ENCODE measurements at regions of chr11 and their contacts with region 1.

Region 1: GRCh38 chr11:77047007-77047927 is 13.1 kb downstream of the B3GNT6 start:
- DNase-seq: peak; percentile 92 to 94
- H3K4me3 ChIP-seq: peak overlapping the region; percentile 41
- H3K4me3 Mint-ChIP-seq: peak overlapping the region; percentile 65
- H3K27ac Mint-ChIP-seq: peak overlapping the region; percentile 49
- H3K4me1 ChIP-seq: peaks cover 9% of the 10 kb centered on the region; the same call in 1 of the 2 replicates
- H3K4me1 Mint-ChIP-seq: peaks cover 15% of the 10 kb centered on the region
- H3K27me3 ChIP-seq: no peaks in the 10 kb centered on the region
- H3K27me3 Mint-ChIP-seq: no peaks in the 10 kb centered on the region
- CTCF ChIP-seq: peak; percentile 81 to 82

Region 2: DNA sequence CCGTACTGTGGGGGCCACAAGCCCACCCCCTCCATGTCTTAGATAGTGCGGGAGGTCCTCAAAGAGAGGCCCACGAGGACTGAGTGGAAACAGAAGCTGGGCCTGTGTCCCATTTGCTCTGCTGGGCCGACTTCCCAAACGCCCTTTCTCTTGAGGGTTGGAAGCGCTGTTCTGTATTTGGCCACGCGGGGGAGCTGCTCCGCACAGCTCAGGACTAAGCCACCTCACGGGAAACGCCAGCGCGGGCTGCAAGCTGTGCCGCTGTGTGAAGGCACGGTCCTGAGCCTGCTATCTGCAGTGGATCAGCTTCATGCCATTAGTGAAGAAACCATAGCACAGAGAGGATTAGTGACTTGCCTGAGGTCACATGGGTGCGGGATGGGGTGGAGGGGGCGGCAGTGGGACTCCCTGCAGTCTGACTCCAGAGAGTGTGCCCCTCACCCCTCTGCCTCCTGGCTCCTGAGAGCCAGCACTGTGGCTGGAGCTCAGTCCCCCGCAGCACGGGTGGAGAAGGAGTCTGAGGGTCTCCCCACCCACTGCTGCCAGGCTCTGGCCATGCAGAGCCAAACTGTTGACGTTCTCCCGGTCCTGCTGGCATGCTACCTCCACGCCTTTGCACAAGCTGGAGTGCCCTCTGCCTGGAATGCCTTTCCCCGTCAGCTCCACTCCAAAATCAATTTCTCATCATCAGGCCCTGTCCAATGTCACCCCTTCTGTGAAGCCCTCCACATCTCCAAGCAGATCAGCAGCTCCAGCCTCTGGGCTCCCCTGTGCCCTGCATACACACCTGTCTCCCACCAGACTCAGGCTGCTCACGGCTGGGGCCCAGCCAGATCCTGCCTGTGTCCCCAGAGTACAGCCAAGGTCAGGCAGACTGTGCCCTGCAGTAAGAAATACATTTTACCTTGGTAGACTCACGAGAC is 325.3 kb before region 1 on chr11:
- CTCF ChIA-PET with region 1: interaction called, 14 read pairs
- POLR2A ChIA-PET with region 1: no interaction called
- intact Hi-C with region 1: no loop called
- DNase-seq: peak; percentile 85 to 91
- H3K4me3 ChIP-seq: no peak overlapping the region
- H3K4me3 Mint-ChIP-seq: no peak overlapping the region
- H3K27ac Mint-ChIP-seq: no peak overlapping the region
- H3K4me1 ChIP-seq: 0 out of 2 replicates have a peak, but pooled peaks cover 7% of the 10 kb centered on the region
- H3K4me1 Mint-ChIP-seq: peaks cover 5% of the 10 kb centered on the region
- H3K27me3 ChIP-seq: no peaks in the 10 kb centered on the region; the same call in 1 of the 2 replicates
- H3K27me3 Mint-ChIP-seq: peaks cover 5% of the 10 kb centered on the region
- CTCF ChIP-seq: peak; percentile 98

Region 3: GRCh38 chr11:76823481-76824078 is 223.7 kb before region 1 on chr11:
- CTCF ChIA-PET with region 1: no interaction called
- POLR2A ChIA-PET with region 1: no interaction called
- intact Hi-C with region 1: no loop called
- DNase-seq: peak in 1 of 2 experiments; percentile 49
- H3K4me3 ChIP-seq: no peak overlapping the region
- H3K4me3 Mint-ChIP-seq: no peak overlapping the region
- H3K27ac Mint-ChIP-seq: peak overlapping the region; percentile 6
- H3K4me1 ChIP-seq: peaks cover 11% of the 10 kb centered on the region
- H3K4me1 Mint-ChIP-seq: peaks cover 12% of the 10 kb centered on the region
- H3K27me3 ChIP-seq: no peaks in the 10 kb centered on the region
- H3K27me3 Mint-ChIP-seq: no peaks in the 10 kb centered on the region
- CTCF ChIP-seq: no peak

Region 4: DNA sequence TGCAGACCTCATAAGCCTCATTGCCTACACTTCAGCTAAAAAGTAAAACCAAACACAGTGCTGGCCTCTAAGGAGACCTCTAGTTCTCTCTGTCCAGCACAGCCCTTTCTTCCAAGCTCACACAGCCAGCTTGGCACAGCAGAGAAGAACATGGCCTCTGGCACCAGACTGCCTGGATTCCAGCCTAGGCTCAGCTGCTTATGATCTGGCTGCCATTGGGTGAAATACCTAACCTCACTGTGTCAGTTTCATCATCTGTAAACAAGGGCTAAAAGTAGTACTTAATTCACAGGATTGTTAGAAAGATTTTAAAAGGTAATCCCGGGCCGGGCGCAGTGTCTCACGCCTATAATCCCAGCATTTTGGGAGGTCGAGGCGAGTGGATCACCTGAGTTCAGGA is 196.5 kb before region 1 on chr11:
- CTCF ChIA-PET with region 1: no interaction called
- POLR2A ChIA-PET with region 1: no interaction called
- intact Hi-C with region 1: no loop called
- DNase-seq: no peak
- H3K4me3 ChIP-seq: no peak overlapping the region
- H3K4me3 Mint-ChIP-seq: no peak overlapping the region
- H3K27ac Mint-ChIP-seq: no peak overlapping the region
- H3K4me1 ChIP-seq: peaks cover 11% of the 10 kb centered on the region
- H3K4me1 Mint-ChIP-seq: peaks cover 11% of the 10 kb centered on the region
- H3K27me3 ChIP-seq: no peaks in the 10 kb centered on the region
- H3K27me3 Mint-ChIP-seq: no peaks in the 10 kb centered on the region
- CTCF ChIP-seq: no peak

Region 5: DNA sequence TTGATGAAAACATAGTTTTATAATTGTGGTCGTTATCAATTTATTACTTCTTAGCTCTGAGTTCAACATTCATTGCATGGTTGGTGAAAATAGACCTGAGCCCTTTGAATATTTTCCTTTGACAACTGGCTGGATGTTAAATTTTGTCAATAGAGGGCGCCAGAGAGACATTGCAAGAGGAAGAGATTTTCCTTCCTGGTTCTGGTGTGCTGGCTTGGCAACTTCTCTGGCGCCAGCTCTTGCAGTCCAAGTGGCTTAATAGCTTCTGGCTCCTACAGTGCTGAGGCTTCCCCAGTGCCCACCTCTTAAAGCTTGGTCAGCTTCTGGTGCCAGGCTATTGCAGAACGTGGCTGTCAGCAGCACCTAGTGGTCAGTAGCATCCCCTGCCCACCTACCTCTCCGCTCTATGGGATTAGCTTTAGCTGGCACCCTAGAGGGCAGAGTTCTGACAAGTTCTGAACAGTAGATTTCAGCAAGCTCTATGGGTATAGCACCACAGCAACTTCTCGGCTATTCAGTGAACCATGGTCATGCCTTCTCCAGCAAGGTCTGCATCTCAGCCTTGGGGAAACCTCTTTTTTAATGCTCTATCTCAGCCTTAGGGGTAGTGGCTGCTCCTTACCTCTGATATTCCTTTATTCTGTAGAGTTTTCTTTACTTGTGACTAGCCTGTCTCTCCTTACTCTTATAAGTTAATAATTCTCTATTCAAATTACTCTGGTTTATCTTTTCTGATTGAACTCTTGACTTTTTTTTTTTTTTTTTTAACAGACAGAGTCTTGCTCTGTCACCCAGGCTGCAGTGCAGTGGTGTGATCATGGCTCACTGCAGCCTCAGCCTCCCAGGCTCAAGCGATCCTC is 127.2 kb before region 1 on chr11:
- CTCF ChIA-PET with region 1: interaction called, 54 read pairs
- POLR2A ChIA-PET with region 1: no interaction called
- intact Hi-C with region 1: loop called (anchors 1 kb)
- DNase-seq: peak; percentile 86 to 91
- H3K4me3 ChIP-seq: no peak overlapping the region
- H3K4me3 Mint-ChIP-seq: no peak overlapping the region
- H3K27ac Mint-ChIP-seq: no peak overlapping the region
- H3K4me1 ChIP-seq: peaks cover 32% of the 10 kb centered on the region
- H3K4me1 Mint-ChIP-seq: peaks cover 25% of the 10 kb centered on the region
- H3K27me3 ChIP-seq: no peaks in the 10 kb centered on the region
- H3K27me3 Mint-ChIP-seq: no peaks in the 10 kb centered on the region
- CTCF ChIP-seq: peak; percentile 95 to 98

Region 6: GRCh38 chr11:76984747-76985146 is 62.5 kb before region 1 on chr11:
- CTCF ChIA-PET with region 1: no interaction called
- POLR2A ChIA-PET with region 1: no interaction called
- intact Hi-C with region 1: no loop called
- DNase-seq: no peak
- H3K4me3 ChIP-seq: no peak overlapping the region
- H3K4me3 Mint-ChIP-seq: no peak overlapping the region
- H3K27ac Mint-ChIP-seq: no peak overlapping the region
- H3K4me1 ChIP-seq: no peaks in the 10 kb centered on the region
- H3K4me1 Mint-ChIP-seq: peaks cover 8% of the 10 kb centered on the region
- H3K27me3 ChIP-seq: no peaks in the 10 kb centered on the region
- H3K27me3 Mint-ChIP-seq: no peaks in the 10 kb centered on the region
- CTCF ChIP-seq: no peak

Region 7: GRCh38 chr11:77066229-77067042 is 19.2 kb after region 1 on chr11 and contains the start of gene CAPN5:
- CTCF ChIA-PET with region 1: interaction called, 35 read pairs
- POLR2A ChIA-PET with region 1: interaction called, 5 read pairs
- intact Hi-C with region 1: loop called (anchors 1 kb)
- DNase-seq: peak; percentile 96 to 100
- H3K4me3 ChIP-seq: peak within 1 kb of the TSS; percentile 82
- H3K4me3 Mint-ChIP-seq: peak within 1 kb of the TSS; percentile 88
- H3K27ac Mint-ChIP-seq: peak within 1 kb of the TSS; percentile 69
- H3K4me1 ChIP-seq: peaks cover 18% of the 10 kb centered on the region
- H3K4me1 Mint-ChIP-seq: peaks cover 22% of the 10 kb centered on the region
- H3K27me3 ChIP-seq: no peaks in the 10 kb centered on the region
- H3K27me3 Mint-ChIP-seq: no peaks in the 10 kb centered on the region
- CTCF ChIP-seq: peak in 1 of 2 experiments; percentile 81
- total RNA-seq, gene CAPN5: 18.8 and 21.2 TPM in 2 replicates

Region 8: DNA sequence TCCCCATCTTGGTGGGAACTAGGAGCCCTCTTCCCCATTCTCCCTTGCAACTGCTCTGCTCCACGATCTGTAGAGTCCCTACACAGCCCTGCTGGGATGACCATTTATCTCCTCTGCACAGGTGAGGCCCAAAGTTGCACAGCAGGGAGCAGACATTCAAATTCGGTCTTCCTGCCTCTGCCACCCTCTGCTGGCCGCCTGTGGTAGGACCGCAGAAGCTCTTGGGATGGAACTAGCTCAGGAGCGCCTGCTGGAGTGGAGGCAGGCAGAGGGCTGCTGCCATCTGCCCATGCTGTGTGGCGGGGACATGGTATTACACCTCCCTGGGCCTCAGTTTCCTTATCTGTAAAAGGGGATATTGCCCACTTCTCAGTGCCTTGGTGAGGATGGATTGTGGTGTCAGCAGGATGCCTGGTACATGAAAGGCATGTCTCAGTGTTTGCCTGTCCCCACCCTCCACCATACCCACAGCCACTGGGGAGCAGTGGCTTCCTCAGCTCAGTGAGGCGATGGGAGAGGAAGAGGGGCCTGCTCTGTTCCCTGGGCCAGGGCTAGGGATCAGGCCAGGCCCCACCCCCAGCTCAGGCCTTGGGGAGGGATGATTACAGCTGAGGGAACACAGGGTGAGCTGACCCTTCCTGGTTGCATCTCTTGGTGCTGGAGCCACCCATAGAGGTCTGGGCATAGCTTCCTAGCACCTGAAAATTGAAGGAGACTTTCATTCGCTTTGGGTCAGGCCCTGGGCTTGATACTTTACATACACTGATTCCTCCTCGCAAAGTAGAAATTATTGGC is 44.1 kb after region 1 on chr11:
- CTCF ChIA-PET with region 1: interaction called, 380 read pairs
- POLR2A ChIA-PET with region 1: interaction called, 10 read pairs
- intact Hi-C with region 1: loop called (anchors 1 kb)
- DNase-seq: peak; percentile 90 to 95
- H3K4me3 ChIP-seq: no peak overlapping the region
- H3K4me3 Mint-ChIP-seq: no peak overlapping the region
- H3K27ac Mint-ChIP-seq: peak overlapping the region; percentile 39
- H3K4me1 ChIP-seq: peaks cover 24% of the 10 kb centered on the region
- H3K4me1 Mint-ChIP-seq: peaks cover 21% of the 10 kb centered on the region
- H3K27me3 ChIP-seq: no peaks in the 10 kb centered on the region
- H3K27me3 Mint-ChIP-seq: no peaks in the 10 kb centered on the region
- CTCF ChIP-seq: peak; percentile 99 to 100

Region 9: GRCh38 chr11:77127232-77127911 is 80.1 kb after region 1 on chr11:
- CTCF ChIA-PET with region 1: interaction called, 19 read pairs
- POLR2A ChIA-PET with region 1: interaction called, 3 read pairs
- intact Hi-C with region 1: no loop called
- DNase-seq: peak; percentile 70 to 84
- H3K4me3 ChIP-seq: peak overlapping the region; percentile 47
- H3K4me3 Mint-ChIP-seq: peak overlapping the region; percentile 69
- H3K27ac Mint-ChIP-seq: peak overlapping the region; percentile 72
- H3K4me1 ChIP-seq: peaks cover 10% of the 10 kb centered on the region
- H3K4me1 Mint-ChIP-seq: peaks cover 19% of the 10 kb centered on the region
- H3K27me3 ChIP-seq: no peaks in the 10 kb centered on the region
- H3K27me3 Mint-ChIP-seq: no peaks in the 10 kb centered on the region
- CTCF ChIP-seq: peak; percentile 100

Region 10: GRCh38 chr11:77457340-77457739 is 410.1 kb after region 1 on chr11:
- CTCF ChIA-PET with region 1: no interaction called
- POLR2A ChIA-PET with region 1: interaction called, 12 read pairs
- intact Hi-C with region 1: no loop called
- DNase-seq: no peak
- H3K4me3 ChIP-seq: no peak overlapping the region
- H3K4me3 Mint-ChIP-seq: no peak overlapping the region
- H3K27ac Mint-ChIP-seq: no peak overlapping the region
- H3K4me1 ChIP-seq: peaks cover 42% of the 10 kb centered on the region
- H3K4me1 Mint-ChIP-seq: peaks cover 49% of the 10 kb centered on the region
- H3K27me3 ChIP-seq: no peaks in the 10 kb centered on the region
- H3K27me3 Mint-ChIP-seq: no peaks in the 10 kb centered on the region
- CTCF ChIP-seq: no peak